HepG2 (cell line): ENCODE measurements at regions of chr20 and their contacts with region 1.

Region 1: DNA sequence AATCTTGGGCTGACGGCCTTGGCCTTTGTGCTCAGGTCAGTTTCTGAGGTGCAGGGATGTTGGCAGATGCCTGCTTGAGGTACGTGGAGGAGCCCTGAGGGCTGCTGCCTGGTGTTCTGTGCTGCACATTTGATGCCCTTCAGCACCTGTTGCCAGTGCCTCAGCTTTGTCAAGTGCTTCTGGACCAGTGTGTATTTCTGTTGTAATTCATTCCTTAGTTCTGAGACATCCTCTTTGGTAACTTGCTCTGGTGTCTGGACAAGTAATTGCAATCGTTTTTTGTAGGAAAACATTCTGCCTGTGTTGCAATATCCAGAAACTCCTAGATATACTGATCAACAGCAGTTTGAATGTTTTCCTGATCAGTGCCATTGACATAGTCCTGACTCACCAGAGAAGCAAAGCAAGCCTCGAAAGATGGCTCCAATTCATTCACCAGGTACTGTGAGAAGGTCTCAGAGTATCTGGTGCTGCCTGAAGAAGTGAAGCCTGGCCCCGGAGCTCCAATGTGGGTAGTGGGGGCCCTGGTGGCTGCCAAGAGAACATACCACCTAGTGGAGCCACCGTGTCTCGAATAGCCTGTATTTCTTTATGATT is 26.7 kb downstream of the ZNF337 start:
- DNase-seq: peak; percentile 61
- ATAC-seq: peak; percentile 91
- H3K4me3 ChIP-seq: no peak overlapping the region
- H3K27ac ChIP-seq: peak overlapping the region; percentile 0
- H3K4me1 ChIP-seq: peaks cover 26% of the 10 kb centered on the region
- H3K27me3 ChIP-seq: no peaks in the 10 kb centered on the region
- CTCF ChIP-seq: peak; percentile 25; the same call in 1 of the 2 replicates
- EP300 ChIP-seq: peak in 1 of 2 experiments; percentile 9; a peak in 1 of 4 replicates
- POLR2A ChIP-seq: no peak
- RAD21 ChIP-seq: peak; percentile 42; the same call in 1 of the 2 replicates

Region 2: DNA sequence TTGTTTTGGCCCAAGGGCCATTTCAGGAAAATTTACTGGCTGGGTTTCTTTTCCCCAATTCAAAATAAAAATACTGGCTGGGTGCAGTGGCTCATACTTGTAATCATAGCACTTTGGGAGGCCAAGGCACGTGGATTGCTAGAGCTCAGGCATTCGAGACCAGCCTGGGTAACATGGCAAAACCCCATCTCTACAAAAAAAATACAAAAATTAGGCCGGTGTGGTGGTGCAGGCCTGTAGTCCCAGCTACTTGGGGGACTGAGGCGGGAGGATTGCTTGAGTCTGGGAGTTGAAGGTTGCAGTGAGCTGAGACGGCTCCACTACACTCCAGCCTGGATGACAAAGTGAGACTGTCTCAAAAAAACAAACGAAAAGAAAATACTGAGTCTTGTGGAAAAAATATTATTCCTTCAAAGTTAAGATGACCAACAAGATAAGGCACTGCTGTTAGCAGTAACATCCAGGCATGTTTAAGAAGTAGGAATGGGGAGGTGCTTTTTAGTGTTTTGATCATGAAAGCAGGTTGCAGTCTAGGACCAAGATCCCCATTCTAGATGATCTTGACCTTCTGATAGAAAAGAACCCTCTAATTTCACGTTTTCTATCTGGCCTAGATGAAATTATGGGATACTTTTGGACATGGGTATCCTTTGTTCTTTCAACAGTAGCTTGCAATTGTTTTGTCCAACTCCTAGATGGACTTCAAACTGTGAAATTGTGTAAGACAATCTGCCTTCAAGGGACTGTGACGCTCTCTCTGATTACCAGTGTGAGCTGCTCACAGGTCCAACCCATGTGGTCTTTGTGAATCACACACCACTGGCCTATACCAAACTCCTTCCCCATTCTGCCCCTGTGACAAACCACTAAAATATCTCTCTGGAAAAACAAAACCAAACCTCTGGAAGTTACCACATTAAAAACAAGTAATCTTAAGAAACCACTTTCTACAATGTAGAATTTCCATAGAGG is 144.3 kb before region 1 on chr20:
- CTCF ChIA-PET with region 1: no interaction called
- POLR2A ChIA-PET with region 1: no interaction called
- in situ Hi-C with region 1: no loop called
- intact Hi-C with region 1: loop called (anchors 10 kb)
- DNase-seq: peak; percentile 97
- ATAC-seq: peak; percentile 98
- H3K4me3 ChIP-seq: no peak overlapping the region
- H3K27ac ChIP-seq: peak overlapping the region; percentile 50
- H3K4me1 ChIP-seq: peaks cover 44% of the 10 kb centered on the region
- H3K27me3 ChIP-seq: no peaks in the 10 kb centered on the region
- CTCF ChIP-seq: no peak
- EP300 ChIP-seq: peak; percentile 29 to 76; a peak in 2 of 4 replicates
- POLR2A ChIP-seq: no peak
- RAD21 ChIP-seq: 0 out of 2 replicates have a peak, but pooled peaks have one; percentile 8

Region 3: GRCh38 chr20:25685276-25686080 is 15.6 kb after region 1 on chr20:
- CTCF ChIA-PET with region 1: no interaction called
- POLR2A ChIA-PET with region 1: no interaction called
- in situ Hi-C with region 1: no loop called
- intact Hi-C with region 1: no loop called
- DNase-seq: no peak
- ATAC-seq: peak; percentile 85
- H3K4me3 ChIP-seq: no peak overlapping the region
- H3K27ac ChIP-seq: no peak overlapping the region
- H3K4me1 ChIP-seq: no peaks in the 10 kb centered on the region
- H3K27me3 ChIP-seq: no peaks in the 10 kb centered on the region
- CTCF ChIP-seq: no peak
- EP300 ChIP-seq: no peak
- POLR2A ChIP-seq: no peak
- RAD21 ChIP-seq: no peak

Region 4: GRCh38 chr20:25696384-25697131 is 26.6 kb after region 1 on chr20 and contains the start of gene ZNF337:
- CTCF ChIA-PET with region 1: no interaction called
- POLR2A ChIA-PET with region 1: no interaction called
- in situ Hi-C with region 1: no loop called
- intact Hi-C with region 1: no loop called
- DNase-seq: peak; percentile 98
- ATAC-seq: peak; percentile 97
- H3K4me3 ChIP-seq: peak within 1 kb of the TSS; percentile 89 to 100 (median 94)
- H3K27ac ChIP-seq: peak within 1 kb of the TSS; percentile 87
- H3K4me1 ChIP-seq: peaks cover 34% of the 10 kb centered on the region
- H3K27me3 ChIP-seq: no peaks in the 10 kb centered on the region
- CTCF ChIP-seq: peak; percentile 86
- EP300 ChIP-seq: no peak; a peak in 2 of 4 replicates
- POLR2A ChIP-seq: peak; percentile 87 to 90
- RAD21 ChIP-seq: peak; percentile 92
- total RNA-seq, gene ZNF337: 19.0 and 19.6 TPM in 2 replicates

Region 5: GRCh38 chr20:25720294-25720693 is 50.4 kb after region 1 on chr20:
- CTCF ChIA-PET with region 1: no interaction called
- POLR2A ChIA-PET with region 1: no interaction called
- in situ Hi-C with region 1: loop called (anchors 10 kb)
- intact Hi-C with region 1: no loop called
- DNase-seq: no peak
- ATAC-seq: peak; percentile 32; the same call in 2 of the 3 replicates
- H3K4me3 ChIP-seq: no peak overlapping the region
- H3K27ac ChIP-seq: no peak overlapping the region
- H3K4me1 ChIP-seq: peaks cover 26% of the 10 kb centered on the region
- H3K27me3 ChIP-seq: no peaks in the 10 kb centered on the region
- CTCF ChIP-seq: no peak
- EP300 ChIP-seq: no peak
- POLR2A ChIP-seq: no peak
- RAD21 ChIP-seq: no peak